MCF 10A (cell line): ENCODE measurements at regions of chr6 and their contacts with region 1.

Region 1: DNA sequence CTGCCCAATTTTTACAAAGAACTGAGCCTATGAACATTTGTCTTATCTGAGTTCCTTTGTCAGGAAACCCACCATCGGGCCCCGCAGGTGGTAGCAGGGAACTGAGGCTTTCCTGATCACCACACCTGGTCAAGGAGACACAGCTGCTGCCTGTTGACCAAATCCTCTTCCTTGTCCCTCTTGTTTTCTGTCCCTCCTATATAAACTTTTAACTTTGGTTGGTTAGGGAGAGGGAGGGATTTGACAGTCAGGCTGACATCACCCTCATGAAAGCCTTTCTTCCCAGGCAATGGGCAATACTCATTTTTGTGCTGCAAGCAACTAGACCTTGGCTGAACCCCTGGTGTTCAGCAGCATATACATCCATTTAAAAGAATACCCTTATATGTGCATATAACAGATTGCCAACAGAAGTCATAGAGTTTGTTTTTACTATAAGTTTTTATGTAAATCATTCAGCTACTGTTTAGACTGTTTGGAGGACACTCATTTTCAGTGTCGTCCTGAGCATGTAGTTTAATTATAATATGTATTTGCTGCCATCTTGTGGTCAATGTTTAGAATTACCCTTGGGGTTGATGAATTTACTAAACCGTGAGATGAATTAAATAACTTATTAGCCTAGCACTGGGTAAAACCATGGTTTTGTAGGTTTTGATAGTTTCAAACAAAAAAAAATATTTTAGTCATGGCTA is 17.0 kb downstream of the CRISP1 start:
- DNase-seq: peak; percentile 55
- H3K4me3 Mint-ChIP-seq: no peak overlapping the region
- H3K27ac Mint-ChIP-seq: no peak overlapping the region
- H3K4me1 Mint-ChIP-seq: no peaks in the 10 kb centered on the region
- H3K27me3 Mint-ChIP-seq: peaks cover 35% of the 10 kb centered on the region
- CTCF ChIP-seq: peak; percentile 54

Region 2: DNA sequence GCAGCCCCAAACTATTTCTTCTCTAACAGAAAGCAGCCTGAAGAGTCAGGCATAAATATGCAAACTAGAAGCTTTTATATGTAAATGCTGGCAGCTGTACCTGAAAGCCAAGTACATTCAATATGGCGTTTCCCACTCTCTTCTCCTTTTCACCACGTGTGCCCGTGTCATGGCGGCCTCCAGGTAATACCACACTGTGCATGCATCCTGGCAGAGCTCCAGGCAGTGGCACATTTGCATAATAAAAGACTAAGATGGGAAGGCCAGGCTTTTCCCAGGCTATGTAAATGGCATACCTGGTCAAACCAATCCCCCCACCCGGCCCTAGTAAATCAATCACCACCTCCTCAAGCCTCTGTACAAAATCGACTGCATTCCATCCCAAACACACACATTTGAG is 506.9 kb before region 1 on chr6:
- CTCF ChIA-PET with region 1: no interaction called
- POLR2A ChIA-PET with region 1: no interaction called
- intact Hi-C with region 1: no loop called
- DNase-seq: no peak
- H3K4me3 Mint-ChIP-seq: no peak overlapping the region
- H3K27ac Mint-ChIP-seq: no peak overlapping the region
- H3K4me1 Mint-ChIP-seq: no peaks in the 10 kb centered on the region
- H3K27me3 Mint-ChIP-seq: no peaks in the 10 kb centered on the region
- CTCF ChIP-seq: no peak

Region 3: DNA sequence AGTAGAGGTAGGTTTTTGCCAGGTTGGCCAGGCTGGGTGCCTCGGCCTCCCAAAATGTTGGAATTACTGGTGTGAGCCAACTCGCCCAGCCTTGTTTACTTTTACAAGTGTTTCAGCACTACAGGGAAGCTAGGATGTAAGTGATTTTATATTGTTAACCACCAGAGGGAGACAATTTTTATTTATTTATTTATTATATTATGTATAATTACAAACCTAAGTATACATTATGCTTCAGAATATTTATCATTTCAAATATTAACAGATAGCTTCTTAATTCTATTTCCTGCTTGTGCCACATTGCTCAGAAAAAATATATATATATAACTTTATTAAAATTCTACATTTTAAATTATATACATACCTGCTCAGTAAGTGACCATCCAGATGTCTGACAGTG is 396.1 kb before region 1 on chr6:
- CTCF ChIA-PET with region 1: interaction called, 4 read pairs
- POLR2A ChIA-PET with region 1: no interaction called
- intact Hi-C with region 1: loop called (anchors 1 kb)
- DNase-seq: peak; percentile 12
- H3K4me3 Mint-ChIP-seq: no peak overlapping the region
- H3K27ac Mint-ChIP-seq: no peak overlapping the region
- H3K4me1 Mint-ChIP-seq: no peaks in the 10 kb centered on the region
- H3K27me3 Mint-ChIP-seq: no peaks in the 10 kb centered on the region
- CTCF ChIP-seq: peak; percentile 33

Region 4: DNA sequence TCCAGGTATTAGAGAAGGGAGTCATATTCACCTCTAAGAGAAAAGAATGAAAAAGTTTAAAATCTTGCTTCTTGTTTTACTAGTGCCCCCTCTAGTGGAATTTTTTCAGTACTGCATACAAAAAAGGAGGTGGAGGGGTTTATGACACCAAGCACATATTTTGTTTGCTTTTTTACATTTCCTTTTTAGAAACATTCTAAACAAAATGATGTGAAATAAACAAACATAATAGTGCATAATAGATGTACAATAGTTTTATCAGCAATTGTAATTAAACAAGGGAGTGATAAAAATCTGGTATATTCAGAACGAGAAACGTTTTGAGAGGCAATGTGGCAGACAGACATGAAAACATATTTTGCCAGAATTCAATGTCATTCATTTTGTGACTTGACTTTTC is 752.9 kb after region 1 on chr6:
- CTCF ChIA-PET with region 1: no interaction called
- POLR2A ChIA-PET with region 1: no interaction called
- intact Hi-C with region 1: no loop called
- DNase-seq: peak; percentile 50
- H3K4me3 Mint-ChIP-seq: no peak overlapping the region
- H3K27ac Mint-ChIP-seq: no peak overlapping the region
- H3K4me1 Mint-ChIP-seq: no peaks in the 10 kb centered on the region
- H3K27me3 Mint-ChIP-seq: peaks cover 54% of the 10 kb centered on the region
- CTCF ChIP-seq: peak; percentile 61